Activated T-helper 2 cell treated with anti-CD3 and anti-CD28 coated beads, Interferon-gamma antibody, Interleukin-2, Interleukin-4, amounts not matched to agents 10 μg/mL and 5 μg/mL and 100 μg/mL, durations not matched to agents 14 hours and 24 hours and 36 hours (primary cell): ENCODE measurements at regions of chr14 and their contacts with region 1.

Region 1: GRCh38 chr14:61438860-61439684 is 117.7 kb downstream of the PRKCH start:
- DNase-seq: no peak
- H3K4me3 Mint-ChIP-seq: peak overlapping the region; percentile 79
- H3K27ac Mint-ChIP-seq: peak overlapping the region; percentile 95
- H3K4me1 Mint-ChIP-seq: peaks cover 77% of the 10 kb centered on the region
- H3K27me3 Mint-ChIP-seq: no peaks in the 10 kb centered on the region

Region 2: GRCh38 chr14:61420326-61420725 is 18.7 kb before region 1 on chr14:
- intact Hi-C with region 1: loop called (anchors 2 kb)
- DNase-seq: no peak
- H3K4me3 Mint-ChIP-seq: no peak overlapping the region
- H3K27ac Mint-ChIP-seq: peak overlapping the region; percentile 14
- H3K4me1 Mint-ChIP-seq: peaks cover 77% of the 10 kb centered on the region
- H3K27me3 Mint-ChIP-seq: no peaks in the 10 kb centered on the region